CD4-positive, alpha-beta T cell (primary cell): ENCODE measurements at regions of chr12 and their contacts with region 1.

Region 1: GRCh38 chr12:76455582-76456345 is 103.8 kb downstream of the OSBPL8 start:
- DNase-seq: peak in 6 of 14 experiments; percentile 2 to 69 (median 40)
- ATAC-seq: peak; percentile 72
- H3K4me3 ChIP-seq: no peak overlapping the region
- H3K4me3 Mint-ChIP-seq: no peak overlapping the region
- H3K27ac ChIP-seq: no peak overlapping the region
- H3K27ac Mint-ChIP-seq: peak overlapping the region; percentile 84
- H3K4me1 ChIP-seq: peaks cover 14% of the 10 kb centered on the region
- H3K4me1 Mint-ChIP-seq: peaks cover 68% of the 10 kb centered on the region
- H3K27me3 ChIP-seq: no peaks in the 10 kb centered on the region
- H3K27me3 Mint-ChIP-seq: no peaks in the 10 kb centered on the region
- CTCF ChIP-seq: peak; percentile 71

Region 2: GRCh38 chr12:76055393-76055792 is 400.4 kb before region 1 on chr12:
- CTCF ChIA-PET with region 1: no interaction called
- POLR2A ChIA-PET with region 1: no interaction called
- intact Hi-C with region 1: loop called in 1 of 2 experiments (anchors 10 kb)
- DNase-seq: no peak
- ATAC-seq: no peak
- H3K4me3 ChIP-seq: no peak overlapping the region
- H3K4me3 Mint-ChIP-seq: no peak overlapping the region
- H3K27ac ChIP-seq: no peak overlapping the region
- H3K27ac Mint-ChIP-seq: no peak overlapping the region
- H3K4me1 ChIP-seq: no peaks in the 10 kb centered on the region
- H3K4me1 Mint-ChIP-seq: peaks cover 5% of the 10 kb centered on the region
- H3K27me3 ChIP-seq: no peaks in the 10 kb centered on the region
- H3K27me3 Mint-ChIP-seq: no peaks in the 10 kb centered on the region
- CTCF ChIP-seq: no peak

Region 3: DNA sequence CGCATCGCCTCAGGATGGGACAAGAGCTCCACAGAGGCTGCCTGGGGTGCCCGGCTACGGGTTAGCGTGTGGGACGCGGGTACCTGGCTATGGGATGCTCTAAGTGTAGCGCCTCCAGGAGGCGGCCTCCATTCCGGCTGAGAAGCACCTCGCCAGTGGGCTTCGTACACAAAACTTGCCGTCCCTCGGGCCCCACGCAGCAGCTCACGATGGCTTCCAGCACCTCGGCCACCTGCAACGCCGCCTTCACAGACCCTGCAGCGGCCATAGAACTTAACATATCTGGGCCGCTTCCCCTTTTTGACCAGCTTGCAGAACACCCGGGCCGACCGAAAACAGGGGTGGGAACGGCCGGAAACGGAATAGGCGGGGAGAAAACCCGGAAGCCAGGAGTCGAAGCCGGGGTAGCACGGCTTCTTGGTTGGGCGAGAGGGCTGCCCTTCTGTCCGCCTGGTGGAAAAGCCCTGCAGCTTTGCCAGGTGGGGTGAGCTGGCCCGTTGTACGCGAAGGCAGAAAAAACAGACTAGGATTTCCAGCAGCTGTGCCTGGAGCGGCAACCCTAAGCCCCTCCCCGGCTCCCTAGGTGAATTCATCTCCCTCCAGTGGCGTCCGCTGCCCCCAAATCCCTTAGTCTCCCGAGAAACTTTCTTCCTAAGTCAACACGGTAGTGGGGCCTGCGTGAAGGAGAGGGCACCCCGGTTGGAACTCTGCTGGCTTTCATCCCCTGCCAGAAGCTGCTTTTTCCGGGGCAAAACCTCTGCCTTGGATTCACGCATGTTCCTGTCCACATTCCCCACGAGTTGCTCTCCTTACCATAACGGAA is 107.5 kb before region 1 on chr12 and contains the start of gene BBS10:
- CTCF ChIA-PET with region 1: no interaction called
- POLR2A ChIA-PET with region 1: interaction called, 15 read pairs
- intact Hi-C with region 1: no loop called
- DNase-seq: peak; percentile 75 to 92 (median 82)
- ATAC-seq: peak; percentile 96
- H3K4me3 ChIP-seq: peak within 1 kb of the TSS; percentile 81
- H3K4me3 Mint-ChIP-seq: peak within 1 kb of the TSS; percentile 96
- H3K27ac ChIP-seq: peak within 1 kb of the TSS; percentile 77
- H3K27ac Mint-ChIP-seq: peak within 1 kb of the TSS; percentile 95
- H3K4me1 ChIP-seq: peaks cover 15% of the 10 kb centered on the region
- H3K4me1 Mint-ChIP-seq: peaks cover 43% of the 10 kb centered on the region
- H3K27me3 ChIP-seq: no peaks in the 10 kb centered on the region
- H3K27me3 Mint-ChIP-seq: no peaks in the 10 kb centered on the region
- CTCF ChIP-seq: peak; percentile 33
- total RNA-seq, gene BBS10: 1.4 TPM

Region 4: DNA sequence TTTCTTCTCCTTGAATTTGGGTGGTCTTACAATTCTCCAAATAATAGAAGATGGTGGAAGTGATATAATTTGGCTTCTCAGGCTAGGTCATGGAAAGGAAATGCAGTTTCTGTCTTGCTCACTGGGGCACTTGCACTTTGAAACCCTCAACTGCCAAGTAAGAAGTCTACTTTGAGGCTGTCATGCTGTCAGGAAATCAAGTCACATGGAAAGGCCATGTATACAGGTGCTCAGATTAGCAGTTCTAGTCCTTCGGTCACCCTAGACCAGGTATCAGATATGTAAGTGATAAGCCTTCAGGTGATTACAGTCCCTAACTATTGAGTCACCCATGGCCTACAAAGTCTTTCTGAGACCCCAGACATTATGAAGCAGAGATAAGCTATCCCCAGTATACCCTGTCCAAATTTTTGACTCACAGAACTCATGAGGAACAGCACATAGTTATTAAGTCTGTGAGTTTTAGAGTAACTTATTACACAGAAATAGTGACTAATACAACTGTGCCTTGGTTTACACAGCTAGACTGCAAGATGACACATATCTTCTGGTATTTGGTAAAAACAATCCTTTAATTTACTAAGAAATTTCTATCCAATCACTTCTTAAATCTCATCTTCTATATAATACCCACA is 81.3 kb before region 1 on chr12:
- CTCF ChIA-PET with region 1: no interaction called
- POLR2A ChIA-PET with region 1: no interaction called
- intact Hi-C with region 1: no loop called
- DNase-seq: no peak
- ATAC-seq: no peak
- H3K4me3 ChIP-seq: no peak overlapping the region
- H3K4me3 Mint-ChIP-seq: no peak overlapping the region
- H3K27ac ChIP-seq: no peak overlapping the region
- H3K27ac Mint-ChIP-seq: no peak overlapping the region
- H3K4me1 ChIP-seq: no peaks in the 10 kb centered on the region
- H3K4me1 Mint-ChIP-seq: no peaks in the 10 kb centered on the region
- H3K27me3 ChIP-seq: no peaks in the 10 kb centered on the region
- H3K27me3 Mint-ChIP-seq: no peaks in the 10 kb centered on the region
- CTCF ChIP-seq: no peak

Region 5: DNA sequence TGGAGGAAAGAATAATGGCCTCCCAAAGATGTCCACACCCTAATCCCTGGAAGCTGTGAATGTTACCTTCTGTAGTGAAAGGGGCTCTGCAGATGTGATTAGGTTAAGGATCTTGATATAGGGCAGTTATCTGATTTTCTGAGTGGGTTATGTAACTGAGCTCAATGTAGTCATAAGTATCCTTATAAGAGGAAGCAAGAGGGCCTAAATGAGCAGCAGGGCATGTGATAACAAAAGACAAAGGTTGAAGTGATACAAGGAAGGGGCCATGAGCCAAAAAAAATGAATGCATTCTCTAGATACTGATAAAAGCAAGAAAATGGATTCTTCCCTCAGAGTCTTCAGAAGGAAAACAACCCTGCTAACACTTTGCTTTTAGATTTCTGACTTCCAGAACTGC is 25.0 kb after region 1 on chr12:
- CTCF ChIA-PET with region 1: no interaction called
- POLR2A ChIA-PET with region 1: no interaction called
- intact Hi-C with region 1: no loop called
- DNase-seq: no peak
- ATAC-seq: no peak
- H3K4me3 ChIP-seq: no peak overlapping the region
- H3K4me3 Mint-ChIP-seq: no peak overlapping the region
- H3K27ac ChIP-seq: no peak overlapping the region
- H3K27ac Mint-ChIP-seq: peak overlapping the region; percentile 2
- H3K4me1 ChIP-seq: no peaks in the 10 kb centered on the region
- H3K4me1 Mint-ChIP-seq: peaks cover 44% of the 10 kb centered on the region
- H3K27me3 ChIP-seq: no peaks in the 10 kb centered on the region
- H3K27me3 Mint-ChIP-seq: no peaks in the 10 kb centered on the region
- CTCF ChIP-seq: no peak

Region 6: GRCh38 chr12:76495556-76495955 is 39.8 kb after region 1 on chr12:
- CTCF ChIA-PET with region 1: no interaction called
- POLR2A ChIA-PET with region 1: no interaction called
- intact Hi-C with region 1: no loop called
- DNase-seq: no peak
- ATAC-seq: no peak
- H3K4me3 ChIP-seq: no peak overlapping the region
- H3K4me3 Mint-ChIP-seq: no peak overlapping the region
- H3K27ac ChIP-seq: no peak overlapping the region
- H3K27ac Mint-ChIP-seq: peak overlapping the region; percentile 37
- H3K4me1 ChIP-seq: peaks cover 4% of the 10 kb centered on the region
- H3K4me1 Mint-ChIP-seq: peaks cover 36% of the 10 kb centered on the region
- H3K27me3 ChIP-seq: no peaks in the 10 kb centered on the region
- H3K27me3 Mint-ChIP-seq: no peaks in the 10 kb centered on the region
- CTCF ChIP-seq: no peak

Region 7: DNA sequence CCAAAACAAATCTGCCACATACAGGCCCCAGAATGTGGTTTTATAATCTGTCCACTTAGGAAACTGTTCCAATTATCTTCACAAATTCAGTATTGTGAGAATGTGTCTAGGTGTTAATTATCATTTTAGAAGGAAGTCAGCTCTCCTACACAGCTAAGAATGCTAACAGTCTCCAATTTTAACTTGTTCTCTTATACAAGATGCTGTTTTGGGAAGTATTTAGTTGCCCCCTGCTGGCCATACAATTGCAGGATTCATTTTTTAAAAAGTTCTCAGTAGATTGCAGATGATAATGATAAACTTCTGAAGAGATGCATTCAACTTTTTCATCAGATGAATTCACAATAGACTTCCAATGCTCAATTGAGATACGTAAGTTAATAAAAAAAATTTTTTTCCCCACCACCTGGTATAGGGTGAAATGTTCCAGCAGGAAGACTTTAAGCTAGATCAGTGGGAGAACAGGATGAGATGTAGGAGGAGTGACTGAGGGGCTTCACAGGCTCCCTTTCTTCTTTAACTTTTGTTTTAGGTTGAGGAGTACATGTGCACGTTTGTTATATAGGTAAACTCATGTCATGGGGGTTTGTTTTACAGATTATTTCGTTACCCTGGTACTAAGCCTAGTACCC is 131.1 kb after region 1 on chr12:
- CTCF ChIA-PET with region 1: interaction called, 3 read pairs
- POLR2A ChIA-PET with region 1: interaction called, 3 read pairs
- intact Hi-C with region 1: loop called in 1 of 2 experiments (anchors 5 kb)
- DNase-seq: peak in 12 of 14 experiments; percentile 4 to 74 (median 15)
- ATAC-seq: peak; percentile 83
- H3K4me3 ChIP-seq: no peak overlapping the region
- H3K4me3 Mint-ChIP-seq: no peak overlapping the region
- H3K27ac ChIP-seq: no peak overlapping the region
- H3K27ac Mint-ChIP-seq: no peak overlapping the region
- H3K4me1 ChIP-seq: no peaks in the 10 kb centered on the region
- H3K4me1 Mint-ChIP-seq: peaks cover 4% of the 10 kb centered on the region
- H3K27me3 ChIP-seq: no peaks in the 10 kb centered on the region
- H3K27me3 Mint-ChIP-seq: no peaks in the 10 kb centered on the region
- CTCF ChIP-seq: peak; percentile 86